IMR-90 (cell line): ENCODE measurements at regions of chr7 and their contacts with region 1.

Region 1: GRCh38 chr7:97027427-97028234 is 3.0 kb upstream of the DLX5 start:
- DNase-seq: peak; percentile 85
- ATAC-seq: peak; percentile 95
- H3K4me3 ChIP-seq: peak overlapping the region; percentile 2; the same call in 1 of the 2 replicates
- H3K27ac ChIP-seq: no peak overlapping the region
- H3K4me1 ChIP-seq: no peaks in the 10 kb centered on the region
- H3K27me3 ChIP-seq: peaks cover 45% of the 10 kb centered on the region
- CTCF ChIP-seq: peak; percentile 93
- POLR2A ChIP-seq: peak; percentile 36; the same call in 1 of the 2 replicates
- RAD21 ChIP-seq: peak; percentile 96

Region 2: GRCh38 chr7:95925236-95925635 is 1102.4 kb before region 1 on chr7:
- CTCF ChIA-PET with region 1: interaction called, 11 read pairs
- POLR2A ChIA-PET with region 1: no interaction called
- dilution Hi-C with region 1: no loop called
- in situ Hi-C with region 1: no loop called
- intact Hi-C with region 1: no loop called
- DNase-seq: no peak
- ATAC-seq: no peak
- H3K4me3 ChIP-seq: no peak overlapping the region
- H3K27ac ChIP-seq: no peak overlapping the region
- H3K4me1 ChIP-seq: no peaks in the 10 kb centered on the region
- H3K27me3 ChIP-seq: no peaks in the 10 kb centered on the region
- CTCF ChIP-seq: no peak
- POLR2A ChIP-seq: no peak
- RAD21 ChIP-seq: no peak

Region 3: GRCh38 chr7:96179837-96180236 is 847.8 kb before region 1 on chr7:
- CTCF ChIA-PET with region 1: no interaction called
- POLR2A ChIA-PET with region 1: no interaction called
- dilution Hi-C with region 1: no loop called
- in situ Hi-C with region 1: no loop called
- intact Hi-C with region 1: loop called (anchors 5 kb)
- DNase-seq: peak; percentile 10
- ATAC-seq: no peak; the same call in 1 of the 2 replicates
- H3K4me3 ChIP-seq: no peak overlapping the region
- H3K27ac ChIP-seq: no peak overlapping the region
- H3K4me1 ChIP-seq: no peaks in the 10 kb centered on the region
- H3K27me3 ChIP-seq: no peaks in the 10 kb centered on the region
- CTCF ChIP-seq: 0 out of 2 replicates have a peak, but pooled peaks have one; percentile 20
- POLR2A ChIP-seq: no peak
- RAD21 ChIP-seq: peak; percentile 37

Region 4: DNA sequence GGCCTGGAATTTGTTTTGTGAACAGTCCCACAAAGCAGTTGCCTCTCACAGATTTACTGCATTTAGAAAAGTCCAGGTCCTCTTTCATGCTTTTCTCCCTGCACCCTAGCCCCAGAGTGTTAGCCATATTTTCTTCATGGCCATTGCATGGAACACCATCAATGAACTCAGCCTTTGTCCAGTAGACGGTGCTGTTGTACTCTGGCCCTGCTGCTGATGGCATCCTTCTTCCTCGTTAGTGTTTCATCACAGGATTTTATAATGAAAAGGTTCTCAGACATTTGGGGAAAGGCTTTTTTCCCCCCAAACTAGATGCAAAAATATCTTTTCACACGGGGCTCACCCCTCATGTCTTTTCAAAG is 612.7 kb before region 1 on chr7:
- CTCF ChIA-PET with region 1: interaction called, 5 read pairs
- POLR2A ChIA-PET with region 1: no interaction called
- dilution Hi-C with region 1: no loop called
- in situ Hi-C with region 1: no loop called
- intact Hi-C with region 1: loop called (anchors 1 kb)
- DNase-seq: peak; percentile 30
- ATAC-seq: peak; percentile 73
- H3K4me3 ChIP-seq: no peak overlapping the region
- H3K27ac ChIP-seq: no peak overlapping the region
- H3K4me1 ChIP-seq: no peaks in the 10 kb centered on the region
- H3K27me3 ChIP-seq: no peaks in the 10 kb centered on the region
- CTCF ChIP-seq: peak; percentile 61
- POLR2A ChIP-seq: no peak
- RAD21 ChIP-seq: peak; percentile 60

Region 5: GRCh38 chr7:96870941-96871340 is 156.7 kb before region 1 on chr7:
- CTCF ChIA-PET with region 1: no interaction called
- POLR2A ChIA-PET with region 1: no interaction called
- dilution Hi-C with region 1: no loop called
- in situ Hi-C with region 1: no loop called
- intact Hi-C with region 1: no loop called
- DNase-seq: no peak
- ATAC-seq: no peak
- H3K4me3 ChIP-seq: no peak overlapping the region
- H3K27ac ChIP-seq: no peak overlapping the region
- H3K4me1 ChIP-seq: no peaks in the 10 kb centered on the region
- H3K27me3 ChIP-seq: no peaks in the 10 kb centered on the region
- CTCF ChIP-seq: no peak
- POLR2A ChIP-seq: no peak
- RAD21 ChIP-seq: no peak